B cell (primary cell): ENCODE measurements at regions of chr14 and their contacts with region 1.

Region 1: GRCh38 chr14:102694530-102695166 is 82.6 kb upstream of the TRAF3 start:
- DNase-seq: peak; percentile 81
- ATAC-seq: peak; percentile 64
- H3K4me3 ChIP-seq: no peak overlapping the region
- H3K4me3 Mint-ChIP-seq: no peak overlapping the region
- H3K27ac ChIP-seq: no peak overlapping the region
- H3K27ac Mint-ChIP-seq: no peak overlapping the region
- H3K4me1 ChIP-seq: peaks cover 8 to 10% of the 10 kb centered on the region in 2 donors
- H3K4me1 Mint-ChIP-seq: peaks cover 36% of the 10 kb centered on the region
- H3K27me3 ChIP-seq: no peaks in the 10 kb centered on the region
- H3K27me3 Mint-ChIP-seq: no peaks in the 10 kb centered on the region
- CTCF ChIP-seq: peak; percentile 78

Region 2: GRCh38 chr14:102389246-102389645 is 305.4 kb before region 1 on chr14:
- CTCF ChIA-PET with region 1: no interaction called
- POLR2A ChIA-PET with region 1: no interaction called
- intact Hi-C with region 1: no loop called
- DNase-seq: no peak
- ATAC-seq: no peak
- H3K4me3 ChIP-seq: peak overlapping the region in 1 of 5 experiments; percentile 15
- H3K4me3 Mint-ChIP-seq: no peak overlapping the region
- H3K27ac ChIP-seq: no peak overlapping the region
- H3K27ac Mint-ChIP-seq: no peak overlapping the region
- H3K4me1 ChIP-seq: no peaks in the 10 kb centered on the region
- H3K4me1 Mint-ChIP-seq: no peaks in the 10 kb centered on the region
- H3K27me3 ChIP-seq: no peaks in the 10 kb centered on the region
- H3K27me3 Mint-ChIP-seq: no peaks in the 10 kb centered on the region
- CTCF ChIP-seq: no peak

Region 3: GRCh38 chr14:102524466-102525218 is 170.0 kb before region 1 on chr14:
- CTCF ChIA-PET with region 1: interaction called, 24 read pairs
- POLR2A ChIA-PET with region 1: no interaction called
- intact Hi-C with region 1: loop called (anchors 10 kb)
- DNase-seq: peak; percentile 92
- ATAC-seq: peak; percentile 94
- H3K4me3 ChIP-seq: peak overlapping the region; percentile 35 to 71 (median 61)
- H3K4me3 Mint-ChIP-seq: peak overlapping the region; percentile 95
- H3K27ac ChIP-seq: peak overlapping the region; percentile 56 to 63
- H3K27ac Mint-ChIP-seq: peak overlapping the region; percentile 98
- H3K4me1 ChIP-seq: peaks cover 10 to 27% of the 10 kb centered on the region in 2 donors
- H3K4me1 Mint-ChIP-seq: peaks cover 27% of the 10 kb centered on the region
- H3K27me3 ChIP-seq: no peaks in the 10 kb centered on the region
- H3K27me3 Mint-ChIP-seq: no peaks in the 10 kb centered on the region
- CTCF ChIP-seq: peak; percentile 96

Region 4: GRCh38 chr14:102708494-102708893 is 13.8 kb after region 1 on chr14:
- CTCF ChIA-PET with region 1: interaction called, 26 read pairs
- POLR2A ChIA-PET with region 1: no interaction called
- intact Hi-C with region 1: no loop called
- DNase-seq: no peak
- ATAC-seq: no peak
- H3K4me3 ChIP-seq: no peak overlapping the region
- H3K4me3 Mint-ChIP-seq: no peak overlapping the region
- H3K27ac ChIP-seq: no peak overlapping the region
- H3K27ac Mint-ChIP-seq: peak overlapping the region; percentile 72
- H3K4me1 ChIP-seq: no peaks in the 10 kb centered on the region
- H3K4me1 Mint-ChIP-seq: peaks cover 4% of the 10 kb centered on the region
- H3K27me3 ChIP-seq: no peaks in the 10 kb centered on the region
- H3K27me3 Mint-ChIP-seq: no peaks in the 10 kb centered on the region
- CTCF ChIP-seq: no peak

Region 5: GRCh38 chr14:102870994-102871831 is 176.6 kb after region 1 on chr14:
- CTCF ChIA-PET with region 1: interaction called, 12 read pairs
- POLR2A ChIA-PET with region 1: no interaction called
- intact Hi-C with region 1: no loop called
- DNase-seq: no peak
- ATAC-seq: no peak
- H3K4me3 ChIP-seq: no peak overlapping the region
- H3K4me3 Mint-ChIP-seq: no peak overlapping the region
- H3K27ac ChIP-seq: no peak overlapping the region
- H3K27ac Mint-ChIP-seq: no peak overlapping the region
- H3K4me1 ChIP-seq: peaks cover 11 to 22% of the 10 kb centered on the region in 2 donors
- H3K4me1 Mint-ChIP-seq: peaks cover 18% of the 10 kb centered on the region
- H3K27me3 ChIP-seq: no peaks in the 10 kb centered on the region
- H3K27me3 Mint-ChIP-seq: no peaks in the 10 kb centered on the region
- CTCF ChIP-seq: no peak

Region 6: DNA sequence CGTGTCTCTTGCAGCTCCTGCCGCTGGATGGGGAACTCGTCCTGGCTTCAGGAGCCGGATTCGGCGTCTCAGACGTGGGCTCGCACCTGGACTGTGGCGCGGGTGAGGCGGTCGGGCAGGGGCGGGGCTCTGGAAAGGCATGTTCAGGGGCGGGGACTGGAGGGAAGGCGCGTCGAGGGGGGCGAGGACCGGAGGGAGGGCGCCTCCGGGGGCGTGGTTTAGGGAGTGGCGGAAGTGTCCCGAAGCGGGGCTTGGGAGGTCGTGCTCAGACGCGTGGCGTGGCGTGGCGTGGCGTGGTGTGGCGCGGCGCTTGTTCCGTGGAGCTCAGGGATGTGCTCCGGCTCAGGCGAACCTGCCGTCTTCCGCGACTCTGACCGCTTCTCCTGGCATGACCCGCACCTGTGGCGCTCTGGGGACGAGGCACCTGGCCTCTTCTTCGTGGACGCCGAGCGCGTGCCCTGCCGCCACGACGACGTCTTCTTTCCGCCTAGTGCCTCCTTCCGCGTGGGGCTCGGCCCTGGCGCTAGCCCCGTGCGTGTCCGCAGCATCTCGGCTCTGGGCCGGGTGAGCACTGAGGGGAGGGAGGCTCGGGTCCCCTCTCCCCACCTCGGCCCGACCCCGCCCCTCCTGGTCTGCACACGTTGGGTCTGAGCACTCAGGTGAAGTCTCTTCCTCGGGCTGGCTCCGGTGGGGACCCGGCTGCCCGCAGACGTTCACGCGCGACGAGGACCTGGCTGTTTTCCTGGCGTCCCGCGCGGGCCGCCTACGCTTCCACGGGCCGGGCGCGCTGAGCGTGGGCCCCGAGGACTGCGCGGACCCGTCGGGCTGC is 234.0 kb after region 1 on chr14:
- CTCF ChIA-PET with region 1: interaction called, 12 read pairs
- POLR2A ChIA-PET with region 1: no interaction called
- intact Hi-C with region 1: no loop called
- DNase-seq: peak; percentile 89
- ATAC-seq: peak; percentile 90
- H3K4me3 ChIP-seq: peak overlapping the region in 4 of 5 experiments; percentile 48 to 77 (median 60)
- H3K4me3 Mint-ChIP-seq: peak overlapping the region; percentile 87
- H3K27ac ChIP-seq: no peak overlapping the region
- H3K27ac Mint-ChIP-seq: peak overlapping the region; percentile 50
- H3K4me1 ChIP-seq: peaks cover 39 to 45% of the 10 kb centered on the region in 2 donors
- H3K4me1 Mint-ChIP-seq: peaks cover 35% of the 10 kb centered on the region
- H3K27me3 ChIP-seq: peaks cover 0 to 49% (median 11%) of the 10 kb centered on the region in 4 experiments
- H3K27me3 Mint-ChIP-seq: peaks cover 14% of the 10 kb centered on the region
- CTCF ChIP-seq: no peak

Region 7: GRCh38 chr14:103091041-103091882 is 396.6 kb after region 1 on chr14:
- CTCF ChIA-PET with region 1: interaction called, 8 read pairs
- POLR2A ChIA-PET with region 1: no interaction called
- intact Hi-C with region 1: loop called (anchors 1 kb)
- DNase-seq: peak; percentile 87
- ATAC-seq: peak; percentile 97
- H3K4me3 ChIP-seq: peak overlapping the region in 4 of 5 experiments; percentile 24 to 56 (median 48)
- H3K4me3 Mint-ChIP-seq: peak overlapping the region; percentile 74
- H3K27ac ChIP-seq: no peak overlapping the region
- H3K27ac Mint-ChIP-seq: no peak overlapping the region
- H3K4me1 ChIP-seq: peaks cover 10 to 15% of the 10 kb centered on the region in 2 donors
- H3K4me1 Mint-ChIP-seq: peaks cover 2% of the 10 kb centered on the region
- H3K27me3 ChIP-seq: peaks cover 0 to 21% (median 1%) of the 10 kb centered on the region in 4 experiments
- H3K27me3 Mint-ChIP-seq: no peaks in the 10 kb centered on the region
- CTCF ChIP-seq: peak; percentile 83